ENCODE measurements at regions of chr19 and their contacts with region 1.

Region 1: GRCh38 chr19:45391340-45391739 is 13.5 kb downstream of the PPP1R13L start:
- DNase-seq: no peak
- ATAC-seq: no peak
- H3K4me3 Mint-ChIP-seq: no peak overlapping the region
- H3K27ac Mint-ChIP-seq: no peak overlapping the region
- H3K4me1 Mint-ChIP-seq: peaks cover 0 to 5% (median under 1%) of the 10 kb centered on the region in 4 donors
- H3K27me3 Mint-ChIP-seq: peaks cover 3 to 26% (median 12%) of the 10 kb centered on the region in 5 donors

Region 2: GRCh38 chr19:45339629-45340028 is 51.7 kb before region 1 on chr19:
- POLR2A ChIA-PET with region 1: interaction called, 10 read pairs
- DNase-seq: no peak
- ATAC-seq: no peak
- H3K4me3 Mint-ChIP-seq: peak overlapping the region in 5 of 10 donors; percentile 38 to 85 (median 68)
- H3K27ac Mint-ChIP-seq: no peak overlapping the region
- H3K4me1 Mint-ChIP-seq: peaks cover 5 to 9% (median 8%) of the 10 kb centered on the region in 4 donors
- H3K27me3 Mint-ChIP-seq: peaks cover 8 to 34% (median 16%) of the 10 kb centered on the region in 5 donors

Region 3: GRCh38 chr19:45363861-45364459 is 27.4 kb before region 1 on chr19:
- POLR2A ChIA-PET with region 1: no interaction called
- DNase-seq: no peak
- ATAC-seq: no peak
- H3K4me3 Mint-ChIP-seq: no peak overlapping the region
- H3K27ac Mint-ChIP-seq: no peak overlapping the region
- H3K4me1 Mint-ChIP-seq: peaks cover 0 to 14% (median 8%) of the 10 kb centered on the region in 4 donors
- H3K27me3 Mint-ChIP-seq: no peaks in the 10 kb centered on the region

Measured in naive thymus-derived CD8-positive, alpha-beta T cell (primary cell).